ENCODE measurements at regions of chr18 and their contacts with region 1.

Region 1: DNA sequence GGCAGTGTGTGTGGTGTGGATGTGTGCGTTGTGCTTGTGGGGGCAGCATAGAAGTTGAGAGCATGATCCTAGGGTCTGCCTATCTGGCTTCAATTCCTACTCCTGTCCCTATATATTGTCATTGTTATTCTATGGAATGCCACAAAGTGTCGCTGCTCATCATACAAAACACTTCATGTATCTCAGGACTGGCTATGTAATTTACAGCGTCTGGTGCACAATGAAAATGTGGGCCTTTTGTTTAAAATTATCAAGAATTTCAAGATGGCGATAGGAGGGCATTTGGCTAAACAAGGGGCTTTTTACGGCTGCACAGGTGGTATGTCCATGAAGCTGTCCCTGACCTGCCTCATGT is 3.4 kb downstream of the SERPINB2 start:
- DNase-seq: peak; percentile 51
- ATAC-seq: peak; percentile 92
- H3K4me3 ChIP-seq: no peak overlapping the region
- H3K27ac ChIP-seq: no peak overlapping the region
- H3K4me1 ChIP-seq: no peaks in the 10 kb centered on the region
- H3K27me3 ChIP-seq: 0 out of 5 replicates have a peak, but pooled peaks cover 0 to 3% of the 10 kb centered on the region in 2 experiments
- CTCF ChIP-seq: peak; percentile 63
- EP300 ChIP-seq: no peak
- POLR2A ChIP-seq: no peak
- RAD21 ChIP-seq: no peak

Region 2: DNA sequence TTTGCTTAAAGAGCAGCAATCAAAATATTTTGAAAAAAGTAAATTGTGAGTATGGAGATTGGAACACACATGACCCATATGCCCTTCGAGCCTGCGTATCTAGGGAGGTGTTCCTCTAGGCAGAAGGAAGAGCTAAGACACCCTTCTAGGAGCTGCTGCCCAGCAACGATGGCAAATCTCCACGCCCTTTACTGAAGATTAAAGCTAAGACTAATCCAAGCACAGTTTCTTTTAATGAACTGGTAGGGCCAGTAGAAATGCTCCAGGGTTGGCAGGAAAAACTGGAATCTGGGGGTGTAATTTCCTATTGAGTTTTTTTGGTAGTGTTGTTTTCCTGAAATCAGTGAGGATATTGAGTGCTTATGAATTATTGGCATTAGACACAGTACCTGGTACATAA is 304.5 kb before region 1 on chr18:
- CTCF ChIA-PET with region 1: no interaction called
- POLR2A ChIA-PET with region 1: no interaction called
- in situ Hi-C with region 1: no loop called
- intact Hi-C with region 1: no loop called
- DNase-seq: no peak
- ATAC-seq: no peak
- H3K4me3 ChIP-seq: no peak overlapping the region
- H3K27ac ChIP-seq: no peak overlapping the region
- H3K4me1 ChIP-seq: no peaks in the 10 kb centered on the region
- H3K27me3 ChIP-seq: 0 out of 5 replicates have a peak, but pooled peaks cover 0 to 3% of the 10 kb centered on the region in 2 experiments
- CTCF ChIP-seq: no peak
- EP300 ChIP-seq: no peak
- POLR2A ChIP-seq: no peak
- RAD21 ChIP-seq: no peak

Region 3: GRCh38 chr18:63936156-63936931 is 45.4 kb after region 1 on chr18:
- CTCF ChIA-PET with region 1: interaction called, 20 read pairs
- POLR2A ChIA-PET with region 1: no interaction called
- in situ Hi-C with region 1: no loop called
- intact Hi-C with region 1: loop called (anchors 1 kb)
- DNase-seq: peak; percentile 55
- ATAC-seq: peak; percentile 100
- H3K4me3 ChIP-seq: peak overlapping the region in 1 of 3 experiments; percentile 28; a peak in 1 of 6 replicates
- H3K27ac ChIP-seq: no peak overlapping the region
- H3K4me1 ChIP-seq: no peaks in the 10 kb centered on the region
- H3K27me3 ChIP-seq: 0 out of 5 replicates have a peak, but pooled peaks cover 0 to 9% of the 10 kb centered on the region in 2 experiments
- CTCF ChIP-seq: peak; percentile 89
- EP300 ChIP-seq: no peak
- POLR2A ChIP-seq: no peak
- RAD21 ChIP-seq: peak; percentile 69

Region 4: DNA sequence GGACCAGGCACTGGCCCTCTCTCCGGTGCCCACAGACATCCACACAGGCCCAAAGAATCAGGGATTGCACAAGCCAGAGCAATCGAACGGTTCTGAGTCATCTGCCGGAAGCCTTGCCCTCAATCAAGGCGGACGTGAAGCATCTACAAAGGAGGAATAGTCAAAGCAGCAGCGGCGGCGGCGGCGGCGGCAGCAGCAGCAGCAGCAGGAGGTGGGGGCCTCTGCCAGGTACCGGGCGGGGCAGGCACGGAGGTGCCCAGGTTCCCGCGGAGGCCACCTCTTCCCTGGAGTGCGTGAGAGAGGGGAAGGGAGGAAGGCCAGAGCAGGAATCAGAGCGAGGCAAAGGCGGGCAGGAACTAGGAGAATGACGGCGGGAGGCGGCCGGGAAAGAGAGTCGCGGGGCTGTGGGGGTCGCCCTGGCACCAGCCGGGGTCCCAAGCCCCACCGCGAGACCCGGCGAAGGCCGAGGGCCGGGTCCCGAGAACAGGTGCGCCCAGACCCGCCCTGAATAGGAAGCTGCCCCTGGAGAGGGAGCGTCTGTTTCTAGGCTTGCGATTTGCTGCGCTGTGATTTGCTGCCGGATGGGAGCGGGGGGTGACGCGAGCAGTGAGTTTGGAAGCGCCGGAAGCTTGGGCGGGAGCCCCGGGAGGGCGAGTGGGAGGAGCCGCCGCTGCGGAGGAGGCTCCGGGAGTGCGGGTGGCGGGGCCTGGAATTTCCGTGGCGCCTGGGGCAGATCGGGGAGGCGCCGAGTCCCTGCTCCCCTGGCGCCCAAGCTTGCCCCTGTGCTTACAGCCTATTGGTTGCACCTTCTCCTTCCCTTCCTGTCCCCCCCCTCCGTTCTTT is 79.3 kb after region 1 on chr18 and contains the start of gene SERPINB8:
- CTCF ChIA-PET with region 1: no interaction called
- POLR2A ChIA-PET with region 1: no interaction called
- in situ Hi-C with region 1: loop called (anchors 10 kb)
- intact Hi-C with region 1: loop called (anchors 1 kb)
- DNase-seq: peak; percentile 67
- ATAC-seq: peak; percentile 96
- H3K4me3 ChIP-seq: peak within 1 kb of the TSS; percentile 62 to 83 (median 78)
- H3K27ac ChIP-seq: no peak within 1 kb of the TSS
- H3K4me1 ChIP-seq: peaks cover 21% of the 10 kb centered on the region
- H3K27me3 ChIP-seq: no peaks in the 10 kb centered on the region
- CTCF ChIP-seq: no peak
- EP300 ChIP-seq: peak in 1 of 2 experiments; percentile 22; a peak in 1 of 4 replicates
- POLR2A ChIP-seq: peak; percentile 55 to 57
- RAD21 ChIP-seq: no peak
- total RNA-seq, gene SERPINB8: 2.2 and 2.6 TPM in 2 replicates

Region 5: DNA sequence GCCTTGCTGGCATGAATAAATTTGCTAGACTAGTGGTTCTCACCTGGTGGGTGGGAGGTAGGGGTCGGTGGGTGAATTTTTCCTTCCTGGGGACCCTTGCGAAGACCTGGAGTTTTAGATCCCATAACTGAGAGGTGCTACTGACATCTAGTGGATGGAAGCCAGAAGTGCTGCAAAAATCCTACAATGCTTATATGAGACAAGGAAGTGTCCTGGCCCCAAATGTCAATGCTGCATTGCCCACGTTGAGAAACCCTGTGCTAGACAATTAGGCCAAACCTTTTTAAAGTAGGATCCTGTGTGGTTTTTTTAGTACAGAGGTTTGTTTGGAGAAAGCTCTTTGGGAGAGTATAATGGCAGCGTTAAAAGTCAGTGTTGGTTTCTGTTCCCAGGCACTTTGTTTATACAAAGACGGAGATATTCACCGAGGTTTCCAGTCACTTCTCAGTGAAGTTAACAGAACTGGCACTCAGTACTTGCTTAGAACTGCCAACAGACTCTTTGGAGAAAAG is 88.5 kb after region 1 on chr18:
- CTCF ChIA-PET with region 1: interaction called, 5 read pairs
- POLR2A ChIA-PET with region 1: no interaction called
- in situ Hi-C with region 1: loop called (anchors 10 kb)
- intact Hi-C with region 1: loop called (anchors 1 kb)
- DNase-seq: peak; percentile 66
- ATAC-seq: peak; percentile 94
- H3K4me3 ChIP-seq: no peak overlapping the region
- H3K27ac ChIP-seq: no peak overlapping the region
- H3K4me1 ChIP-seq: no peaks in the 10 kb centered on the region
- H3K27me3 ChIP-seq: no peaks in the 10 kb centered on the region
- CTCF ChIP-seq: peak; percentile 83
- EP300 ChIP-seq: no peak
- POLR2A ChIP-seq: no peak
- RAD21 ChIP-seq: no peak

Region 6: DNA sequence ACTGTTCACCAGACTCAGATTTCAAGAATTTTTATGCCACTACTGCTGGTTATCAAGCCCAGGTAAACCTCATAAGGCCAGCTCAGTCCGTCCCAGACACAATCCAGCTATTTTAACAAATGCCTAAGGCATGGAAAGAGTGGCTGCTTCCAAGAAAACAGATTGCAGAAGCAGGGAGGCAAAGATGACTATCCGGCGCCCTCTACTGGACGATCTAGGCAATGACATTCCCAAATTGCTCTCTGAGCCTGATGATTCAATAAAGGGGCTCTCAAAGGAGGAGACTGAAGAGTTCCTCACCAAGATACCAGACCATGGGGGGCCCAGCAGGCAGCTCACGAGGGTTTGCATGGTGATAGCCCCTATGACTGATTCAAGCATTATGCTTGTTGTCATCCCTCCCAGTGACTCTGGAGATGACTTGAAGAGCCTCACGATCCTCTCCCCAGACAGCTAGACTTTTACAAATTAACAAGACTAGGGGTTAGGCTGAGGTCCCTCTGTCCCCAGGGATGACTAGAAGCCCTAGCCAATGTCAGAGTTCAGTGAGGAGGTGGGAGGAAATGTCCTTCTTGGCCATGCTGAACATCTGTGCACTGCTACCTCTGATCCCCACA is 104.0 kb after region 1 on chr18:
- CTCF ChIA-PET with region 1: interaction called, 9 read pairs
- POLR2A ChIA-PET with region 1: no interaction called
- in situ Hi-C with region 1: no loop called
- intact Hi-C with region 1: loop called (anchors 1 kb)
- DNase-seq: peak; percentile 16
- ATAC-seq: peak; percentile 75
- H3K4me3 ChIP-seq: no peak overlapping the region
- H3K27ac ChIP-seq: no peak overlapping the region
- H3K4me1 ChIP-seq: no peaks in the 10 kb centered on the region
- H3K27me3 ChIP-seq: no peaks in the 10 kb centered on the region
- CTCF ChIP-seq: peak; percentile 74
- EP300 ChIP-seq: no peak
- POLR2A ChIP-seq: no peak
- RAD21 ChIP-seq: no peak

Region 7: GRCh38 chr18:64090876-64091275 is 199.9 kb after region 1 on chr18:
- CTCF ChIA-PET with region 1: no interaction called
- POLR2A ChIA-PET with region 1: no interaction called
- in situ Hi-C with region 1: no loop called
- intact Hi-C with region 1: no loop called
- DNase-seq: no peak
- ATAC-seq: no peak
- H3K4me3 ChIP-seq: no peak overlapping the region
- H3K27ac ChIP-seq: no peak overlapping the region
- H3K4me1 ChIP-seq: no peaks in the 10 kb centered on the region
- H3K27me3 ChIP-seq: no peaks in the 10 kb centered on the region
- CTCF ChIP-seq: no peak
- EP300 ChIP-seq: no peak
- POLR2A ChIP-seq: no peak
- RAD21 ChIP-seq: no peak